WTC11 (cell line): ENCODE measurements at regions of chr22 and their contacts with region 1.

Region 1: GRCh38 chr22:43884600-43885325 is 7.0 kb downstream of the PNPLA5 start:
- DNase-seq: peak; percentile 89
- ATAC-seq: peak; percentile 72
- H3K4me3 Mint-ChIP-seq: no peak overlapping the region
- H3K27ac Mint-ChIP-seq: no peak overlapping the region
- H3K4me1 Mint-ChIP-seq: peaks cover 4% of the 10 kb centered on the region
- H3K27me3 Mint-ChIP-seq: no peaks in the 10 kb centered on the region
- CTCF ChIP-seq: peak; percentile 85

Region 2: GRCh38 chr22:43750791-43751190 is 134.0 kb before region 1 on chr22:
- CTCF ChIA-PET with region 1: interaction called, 19 read pairs
- POLR2A ChIA-PET with region 1: no interaction called
- DNase-seq: no peak
- ATAC-seq: no peak; the same call in 1 of the 2 replicates
- H3K4me3 Mint-ChIP-seq: no peak overlapping the region
- H3K27ac Mint-ChIP-seq: no peak overlapping the region
- H3K4me1 Mint-ChIP-seq: peaks cover 22% of the 10 kb centered on the region
- H3K27me3 Mint-ChIP-seq: no peaks in the 10 kb centered on the region
- CTCF ChIP-seq: no peak

Region 3: GRCh38 chr22:43826142-43827002 is 58.4 kb before region 1 on chr22:
- CTCF ChIA-PET with region 1: interaction called, 69 read pairs
- POLR2A ChIA-PET with region 1: no interaction called
- DNase-seq: no peak
- ATAC-seq: no peak
- H3K4me3 Mint-ChIP-seq: no peak overlapping the region
- H3K27ac Mint-ChIP-seq: 0 out of 2 replicates have a peak overlapping the region, but pooled peaks have one; percentile 43
- H3K4me1 Mint-ChIP-seq: peaks cover 53% of the 10 kb centered on the region
- H3K27me3 Mint-ChIP-seq: no peaks in the 10 kb centered on the region
- CTCF ChIP-seq: no peak

Region 4: DNA sequence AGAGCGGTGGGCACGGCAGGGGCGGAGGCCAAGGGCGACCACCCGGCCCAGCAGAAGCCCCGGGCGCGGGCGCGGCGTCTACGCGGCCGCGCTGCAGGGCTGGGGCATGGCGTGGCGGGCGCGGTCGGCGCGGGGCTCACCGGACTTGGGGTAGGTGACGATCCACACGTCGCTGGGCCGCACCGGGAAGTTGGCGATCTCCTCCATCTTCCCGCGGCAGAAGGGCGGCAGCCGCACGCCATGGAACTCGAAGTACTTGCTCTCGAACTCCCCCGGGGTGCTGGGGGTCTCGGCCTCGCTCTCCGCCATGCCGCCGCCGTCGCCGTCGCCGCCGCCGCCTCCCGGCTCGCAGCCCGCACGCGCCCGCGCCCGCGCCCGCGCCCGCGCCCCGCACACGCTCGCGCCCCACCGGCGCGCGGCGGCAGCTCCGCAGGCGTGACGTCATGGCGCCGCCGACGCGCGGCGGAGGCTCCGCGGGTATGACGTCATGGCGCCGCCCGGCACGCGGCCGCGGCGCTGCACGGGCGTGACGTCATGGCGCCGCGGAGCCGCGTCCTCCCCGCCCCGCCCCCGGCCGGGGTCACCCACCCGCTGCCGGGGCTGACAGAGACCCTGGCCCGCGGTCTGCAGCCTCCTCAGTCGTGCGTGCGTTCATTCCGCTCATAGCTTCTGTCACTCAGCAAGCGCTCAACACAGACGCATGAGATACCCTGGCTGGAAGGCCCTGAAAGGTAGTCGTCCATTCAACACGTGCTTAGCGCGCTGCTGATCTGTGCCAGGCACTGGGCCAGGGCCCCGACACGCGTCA is 22.5 kb before region 1 on chr22 and contains the start of gene SULT4A1:
- CTCF ChIA-PET with region 1: interaction called, 97 read pairs
- POLR2A ChIA-PET with region 1: interaction called, 4 read pairs
- DNase-seq: peak; percentile 47
- ATAC-seq: peak; percentile 36
- H3K4me3 Mint-ChIP-seq: peak within 1 kb of the TSS; percentile 70
- H3K27ac Mint-ChIP-seq: peak within 1 kb of the TSS; percentile 65; the same call in 1 of the 2 replicates
- H3K4me1 Mint-ChIP-seq: peaks cover 28% of the 10 kb centered on the region
- H3K27me3 Mint-ChIP-seq: peaks cover 17% of the 10 kb centered on the region
- CTCF ChIP-seq: no peak
- total RNA-seq, gene SULT4A1: 12.5 to 13.0 TPM (median 12.6 TPM) in 3 replicates

Region 5: DNA sequence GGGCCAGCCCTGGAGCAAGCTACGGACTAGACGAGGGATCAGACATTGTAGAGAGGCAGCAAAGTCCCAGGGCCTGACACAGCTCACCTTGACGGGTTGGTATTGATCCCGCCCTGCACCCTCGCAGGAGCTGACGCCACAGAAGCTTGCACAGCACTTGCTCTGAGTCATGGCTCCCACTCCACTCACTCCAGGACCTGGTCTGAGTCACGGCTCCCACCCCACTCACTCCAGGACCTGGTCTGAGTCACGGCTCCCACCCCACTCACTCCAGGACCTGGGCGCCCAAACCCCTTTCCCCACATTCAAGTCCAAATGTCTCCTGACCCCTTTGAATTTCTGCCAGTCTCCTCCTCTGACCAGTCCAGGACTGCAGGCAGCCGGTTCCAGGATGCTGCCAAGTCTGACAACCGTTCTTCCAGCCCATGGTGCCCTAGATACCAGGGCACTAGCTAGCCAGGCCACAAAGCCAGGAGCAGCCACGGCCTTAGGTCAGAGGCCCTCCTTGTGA is 13.0 kb after region 1 on chr22:
- CTCF ChIA-PET with region 1: interaction called, 162 read pairs
- POLR2A ChIA-PET with region 1: no interaction called
- DNase-seq: no peak
- ATAC-seq: no peak
- H3K4me3 Mint-ChIP-seq: no peak overlapping the region
- H3K27ac Mint-ChIP-seq: no peak overlapping the region
- H3K4me1 Mint-ChIP-seq: no peaks in the 10 kb centered on the region
- H3K27me3 Mint-ChIP-seq: peaks cover 3% of the 10 kb centered on the region
- CTCF ChIP-seq: no peak

Region 6: DNA sequence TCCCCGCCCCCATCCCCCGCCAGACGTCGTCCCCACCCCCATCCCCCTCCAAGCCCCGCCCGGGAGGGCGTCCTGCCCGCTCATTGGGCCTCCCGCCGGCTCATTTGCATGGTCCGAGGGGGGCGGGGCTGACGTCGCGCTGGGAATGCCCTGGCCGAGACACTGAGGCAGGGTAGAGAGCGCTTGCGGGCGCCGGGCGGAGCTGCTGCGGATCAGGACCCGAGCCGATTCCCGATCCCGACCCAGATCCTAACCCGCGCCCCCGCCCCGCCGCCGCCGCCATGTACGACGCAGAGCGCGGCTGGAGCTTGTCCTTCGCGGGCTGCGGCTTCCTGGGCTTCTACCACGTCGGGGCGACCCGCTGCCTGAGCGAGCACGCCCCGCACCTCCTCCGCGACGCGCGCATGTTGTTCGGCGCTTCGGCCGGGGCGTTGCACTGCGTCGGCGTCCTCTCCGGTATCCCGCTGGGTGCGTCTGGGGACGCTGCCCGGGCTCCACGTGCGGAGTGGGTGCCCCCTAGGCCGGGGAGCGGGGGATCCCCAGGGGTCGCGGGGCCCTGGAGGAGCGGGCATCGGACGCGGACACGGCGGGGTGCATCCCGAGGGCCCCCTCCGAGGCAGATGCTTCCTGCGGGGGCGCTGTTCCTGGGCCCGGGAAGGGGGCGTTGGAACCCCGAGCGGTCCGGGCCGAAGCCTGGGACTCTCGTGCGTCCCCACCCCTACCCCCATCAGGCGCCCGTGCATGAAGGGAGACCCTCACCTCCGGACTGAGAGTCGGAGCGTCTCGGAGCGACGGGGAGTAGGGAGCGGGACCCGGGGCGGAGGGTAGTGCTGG is 39.1 kb after region 1 on chr22 and contains the start of gene PNPLA3:
- CTCF ChIA-PET with region 1: interaction called, 37 read pairs
- POLR2A ChIA-PET with region 1: no interaction called
- DNase-seq: peak; percentile 98
- ATAC-seq: peak; percentile 86
- H3K4me3 Mint-ChIP-seq: peak within 1 kb of the TSS; percentile 84
- H3K27ac Mint-ChIP-seq: peak within 1 kb of the TSS; percentile 79
- H3K4me1 Mint-ChIP-seq: peaks cover 26% of the 10 kb centered on the region
- H3K27me3 Mint-ChIP-seq: no peaks in the 10 kb centered on the region; the same call in 1 of the 2 replicates
- CTCF ChIP-seq: no peak
- total RNA-seq, gene PNPLA3: 17.9 to 19.8 TPM (median 19.6 TPM) in 3 replicates

Region 7: GRCh38 chr22:43955040-43955882 is 70.5 kb after region 1 on chr22 and contains the start of gene SAMM50:
- CTCF ChIA-PET with region 1: interaction called, 14 read pairs
- POLR2A ChIA-PET with region 1: no interaction called
- DNase-seq: peak; percentile 91
- ATAC-seq: peak; percentile 88
- H3K4me3 Mint-ChIP-seq: peak within 1 kb of the TSS; percentile 95
- H3K27ac Mint-ChIP-seq: peak within 1 kb of the TSS; percentile 89
- H3K4me1 Mint-ChIP-seq: peaks cover 29% of the 10 kb centered on the region
- H3K27me3 Mint-ChIP-seq: no peaks in the 10 kb centered on the region
- CTCF ChIP-seq: no peak
- total RNA-seq, gene SAMM50: 59.3 to 72.1 TPM (median 62.1 TPM) in 3 replicates

Region 8: GRCh38 chr22:44261861-44262595 is 377.3 kb after region 1 on chr22:
- CTCF ChIA-PET with region 1: no interaction called
- POLR2A ChIA-PET with region 1: no interaction called
- DNase-seq: peak; percentile 7
- ATAC-seq: no peak
- H3K4me3 Mint-ChIP-seq: no peak overlapping the region
- H3K27ac Mint-ChIP-seq: 0 out of 2 replicates have a peak overlapping the region, but pooled peaks have one; percentile 13
- H3K4me1 Mint-ChIP-seq: peaks cover 22% of the 10 kb centered on the region
- H3K27me3 Mint-ChIP-seq: no peaks in the 10 kb centered on the region
- CTCF ChIP-seq: no peak